ENCODE measurements at regions of chr10 and their contacts with region 1.

Region 1: DNA sequence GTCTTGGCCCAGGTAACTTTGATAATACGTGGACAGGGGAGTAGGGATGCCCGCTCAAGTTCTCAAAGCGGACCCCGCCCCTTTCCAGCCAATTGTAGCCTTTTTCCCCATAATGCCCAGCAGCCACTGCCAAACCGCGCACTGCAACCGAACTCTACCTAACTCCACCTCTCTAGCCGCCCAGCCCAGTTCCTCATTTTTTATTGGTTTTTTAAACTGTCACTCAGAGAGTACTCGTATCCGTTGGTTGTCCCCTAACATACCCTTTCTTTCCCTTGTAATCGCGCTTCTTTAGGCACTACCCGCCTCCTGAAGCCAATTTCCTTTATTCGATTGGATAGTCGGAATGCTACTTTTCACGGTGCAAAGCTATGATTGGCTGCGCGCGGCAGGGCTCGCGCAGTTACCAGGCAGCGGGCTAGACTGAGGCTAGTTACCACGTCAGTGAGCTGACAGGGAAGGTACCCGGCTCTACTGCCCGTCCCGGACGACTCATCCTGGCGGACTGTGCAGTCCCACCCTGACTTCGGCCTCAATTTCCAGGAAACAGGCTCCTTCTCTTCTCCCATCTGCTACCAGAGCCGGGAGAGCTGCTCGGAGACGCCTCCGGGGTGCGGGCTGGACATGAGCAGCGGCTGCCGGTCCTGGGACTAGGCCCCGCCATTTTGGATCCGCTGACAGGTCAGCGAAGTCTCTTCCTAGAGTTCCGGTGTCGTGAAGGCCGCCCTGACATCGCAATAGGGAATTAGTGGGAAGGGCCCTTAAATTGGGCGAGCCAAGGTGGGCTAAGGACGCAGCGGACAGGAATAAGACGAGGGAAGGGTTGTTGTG is at the start of gene GBF1:
- DNase-seq: peak; percentile 95
- CTCF ChIP-seq: no peak

Region 2: DNA sequence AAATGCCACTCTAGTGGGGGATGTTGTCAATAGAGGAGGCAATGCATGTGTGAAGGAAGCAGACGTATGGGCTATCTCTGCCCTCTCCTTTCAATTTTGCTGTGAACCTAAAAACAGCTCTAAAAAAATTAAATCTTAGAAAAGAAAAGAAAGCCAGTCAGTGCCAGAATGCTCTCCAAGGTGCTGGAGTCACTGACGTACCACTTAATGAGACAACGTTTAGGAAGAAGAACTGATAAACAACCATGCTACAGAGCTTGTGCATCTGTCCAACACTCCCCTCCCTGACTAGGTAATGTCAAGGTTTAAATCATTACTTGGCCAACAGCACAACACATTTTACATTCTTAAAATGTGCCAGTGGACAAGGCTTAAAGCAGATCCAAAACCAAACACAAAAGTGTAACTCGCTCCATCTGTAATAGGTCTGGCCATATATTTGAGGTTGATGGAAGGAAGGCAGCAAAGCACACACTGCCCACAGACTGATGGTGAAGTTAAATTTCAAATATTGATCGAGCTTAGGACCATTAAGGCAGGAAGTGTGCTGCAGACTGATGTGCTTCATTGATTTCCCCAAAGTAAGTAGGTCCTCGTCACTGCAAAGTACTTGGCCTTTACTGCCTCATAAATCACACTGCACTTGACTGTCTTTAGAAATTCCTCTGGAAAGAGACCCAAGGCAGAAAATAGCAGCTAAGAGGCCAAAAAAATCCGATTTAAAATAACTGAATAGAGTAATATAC is 204.8 kb before region 1 on chr10:
- in situ Hi-C with region 1: no loop called
- DNase-seq: no peak
- CTCF ChIP-seq: no peak

Region 3: GRCh38 chr10:102352066-102352715 is 106.9 kb after region 1 on chr10:
- in situ Hi-C with region 1: loop called (anchors 5 kb)
- DNase-seq: peak; percentile 72
- CTCF ChIP-seq: peak; percentile 88

Region 4: DNA sequence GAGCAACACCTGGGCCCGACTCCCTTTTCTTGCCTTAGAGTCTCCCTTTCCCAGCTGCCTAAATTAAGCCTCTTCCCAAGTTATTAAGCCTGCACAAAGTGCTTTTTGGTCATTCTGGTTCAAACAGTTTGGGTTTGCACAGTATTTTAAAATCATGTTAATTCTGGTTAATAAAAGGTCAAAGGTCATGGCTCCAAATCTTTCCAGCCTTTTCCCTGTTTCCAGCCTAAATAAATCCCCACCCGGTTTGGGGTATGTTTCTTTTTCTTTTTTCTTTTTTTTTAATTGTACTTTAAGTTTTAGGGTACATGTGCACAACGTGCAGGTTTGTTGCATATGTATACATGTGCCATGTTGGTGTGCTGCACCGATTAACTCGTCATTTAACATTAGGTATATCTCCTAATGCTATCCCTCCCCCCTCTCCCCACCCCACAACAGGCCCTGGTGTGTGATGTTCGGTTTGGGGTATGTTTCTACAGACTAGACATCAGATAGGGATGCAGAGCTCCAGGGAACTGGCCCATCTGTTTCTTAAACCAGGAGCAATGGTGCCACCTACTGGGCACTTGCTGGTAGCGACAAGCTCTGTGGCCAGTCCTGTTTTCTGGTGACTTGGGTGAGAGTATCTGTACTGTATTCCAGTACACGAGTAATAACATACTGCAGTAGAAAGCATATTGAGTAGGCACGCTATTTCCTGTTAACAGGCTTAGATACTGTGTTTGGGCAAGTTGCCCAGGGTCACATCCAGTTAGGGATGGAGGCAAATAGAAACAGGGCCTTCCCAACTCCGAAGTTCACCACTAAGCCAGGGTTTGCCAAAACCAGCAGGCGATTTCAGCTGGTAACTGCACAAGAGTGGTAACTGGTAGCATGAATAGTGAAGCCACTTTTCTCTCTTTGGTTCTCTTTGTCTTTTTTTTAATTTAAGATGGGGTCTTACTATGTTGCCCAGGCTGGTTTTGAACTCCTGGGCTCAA is 338.4 kb after region 1 on chr10:
- in situ Hi-C with region 1: loop called (anchors 25 kb)
- DNase-seq: peak; percentile 90
- CTCF ChIP-seq: peak; percentile 83

Region 5: GRCh38 chr10:102835007-102835482 is 589.7 kb after region 1 on chr10:
- in situ Hi-C with region 1: no loop called
- DNase-seq: peak; percentile 86
- CTCF ChIP-seq: peak; percentile 76